ENCODE measurements at regions of chr12 and their contacts with region 1.

Region 1: DNA sequence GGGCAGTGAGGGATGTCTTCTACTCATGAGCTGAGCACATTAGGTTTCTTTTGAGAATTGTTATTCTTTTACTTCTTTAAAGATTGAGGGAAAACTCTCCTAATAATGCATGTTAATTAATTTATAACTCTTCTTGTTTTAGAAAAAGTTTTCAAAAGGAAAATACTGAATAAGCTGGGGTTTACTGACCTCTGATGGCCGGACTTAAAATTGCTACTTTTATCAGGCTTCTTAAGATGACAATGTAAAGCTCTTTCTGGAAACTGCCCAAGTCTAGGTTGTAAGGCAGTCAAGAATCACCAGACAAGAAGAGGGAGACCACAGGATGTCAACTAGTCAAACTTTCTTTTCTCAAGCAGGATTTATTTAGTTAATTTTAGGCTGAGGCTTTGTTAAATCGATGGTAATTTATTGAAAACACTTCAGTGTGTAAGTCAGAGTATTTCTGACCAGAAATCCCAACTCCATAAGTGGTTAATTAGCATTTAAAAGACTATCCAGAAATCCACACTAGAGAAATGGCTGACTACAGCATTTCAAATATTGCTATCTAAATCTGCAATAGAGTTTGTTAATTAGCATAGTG is 82.1 kb downstream of the AVPR1A start:
- ATAC-seq: peak in 3 of 8 experiments; percentile 28 to 56 (median 34)
- H3K4me3 ChIP-seq: no peak overlapping the region
- H3K27ac ChIP-seq: no peak overlapping the region
- H3K4me1 ChIP-seq: peaks cover 0 to 2% of the 10 kb centered on the region in 2 donors

Region 2: DNA sequence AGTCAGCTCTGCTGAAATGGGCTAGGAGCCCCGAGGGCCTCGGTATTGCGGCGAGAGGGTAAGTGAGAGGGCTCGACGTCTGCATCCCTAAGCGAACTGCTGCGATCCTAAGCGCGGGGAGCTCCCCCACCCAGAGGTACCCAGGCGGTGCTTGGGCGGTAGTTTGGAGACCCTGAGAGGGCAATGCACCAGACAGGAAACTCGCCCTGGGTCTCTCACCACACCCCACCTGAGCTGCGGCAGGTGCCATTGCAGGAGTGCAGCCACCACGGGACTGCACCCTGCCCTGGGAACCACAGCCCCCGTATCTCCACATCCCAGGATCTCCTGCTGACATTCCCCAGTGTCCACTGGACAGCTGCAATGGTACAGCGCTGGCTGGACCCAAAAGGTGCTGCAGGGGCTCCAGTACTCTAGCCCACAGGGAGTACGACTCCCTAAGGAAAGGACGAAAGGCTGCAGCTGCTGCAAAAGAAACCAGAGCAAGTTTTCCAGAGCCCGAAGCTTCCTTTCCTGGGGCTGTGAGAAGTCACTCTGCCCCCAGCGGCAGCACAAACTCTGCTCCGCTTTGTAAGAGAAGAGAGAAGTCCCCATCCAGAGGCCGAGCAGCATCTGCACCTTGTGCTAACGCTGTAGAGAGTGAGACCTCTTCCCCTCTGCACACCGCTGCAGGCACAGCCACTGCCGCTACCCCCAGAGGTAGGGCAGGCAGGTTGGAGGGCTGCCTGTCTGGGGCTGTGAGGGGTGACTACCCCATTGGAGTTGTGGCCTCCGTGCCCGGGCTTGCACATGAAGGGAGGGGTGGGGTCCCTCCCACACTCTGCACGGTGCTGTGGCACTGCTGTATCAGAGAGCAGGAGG is 633.4 kb before region 1 on chr12:
- in situ Hi-C with region 1: loop called in 1 of 9 experiments (anchors 25 kb)
- ATAC-seq: peak; percentile 64 to 95 (median 84)
- H3K4me3 ChIP-seq: peak overlapping the region in 3 of 5 donors; percentile 15 to 27 (median 22)
- H3K27ac ChIP-seq: no peak overlapping the region
- H3K4me1 ChIP-seq: no peaks in the 10 kb centered on the region

Region 3: DNA sequence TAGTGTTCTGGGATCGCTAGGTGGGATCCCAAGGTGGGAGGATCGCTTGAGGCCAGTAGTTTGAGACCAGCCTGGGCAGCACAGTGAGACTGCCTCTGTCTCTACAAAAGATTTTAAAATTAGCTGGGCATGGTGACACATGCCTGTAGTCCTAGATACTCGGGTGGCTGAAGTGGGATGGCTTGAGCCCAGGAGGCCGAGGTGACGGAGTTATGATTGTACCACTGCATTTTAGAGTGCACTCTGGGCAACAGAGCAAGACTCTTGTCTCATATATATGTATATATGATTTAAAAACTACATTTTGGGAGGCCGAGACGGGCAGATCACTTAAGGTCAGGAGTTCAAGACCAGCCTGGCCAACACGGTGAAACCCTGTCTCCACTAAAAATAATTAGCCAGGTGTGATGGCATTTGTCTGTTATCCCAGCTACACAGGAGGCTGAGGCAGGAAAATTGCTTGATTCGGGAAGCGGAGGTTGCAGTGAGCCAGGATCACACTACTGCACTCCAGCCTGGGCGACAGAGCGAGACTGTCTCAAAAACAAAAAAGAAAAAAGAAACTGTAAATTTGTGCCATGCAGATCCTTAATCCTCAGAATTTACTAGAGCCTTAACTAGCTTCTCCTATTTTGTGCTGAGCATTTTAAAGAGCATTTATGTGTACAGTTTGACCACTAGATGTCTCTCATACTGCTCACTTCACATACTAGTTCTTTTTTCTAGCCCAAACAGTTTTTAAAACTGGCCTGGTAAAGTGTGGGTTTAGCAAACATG is 487.5 kb before region 1 on chr12:
- in situ Hi-C with region 1: loop called in 1 of 9 experiments (anchors 25 kb)
- ATAC-seq: peak in 7 of 8 experiments; percentile 34 to 75 (median 69)
- H3K4me3 ChIP-seq: no peak overlapping the region
- H3K27ac ChIP-seq: no peak overlapping the region
- H3K4me1 ChIP-seq: no peaks in the 10 kb centered on the region

Region 4: DNA sequence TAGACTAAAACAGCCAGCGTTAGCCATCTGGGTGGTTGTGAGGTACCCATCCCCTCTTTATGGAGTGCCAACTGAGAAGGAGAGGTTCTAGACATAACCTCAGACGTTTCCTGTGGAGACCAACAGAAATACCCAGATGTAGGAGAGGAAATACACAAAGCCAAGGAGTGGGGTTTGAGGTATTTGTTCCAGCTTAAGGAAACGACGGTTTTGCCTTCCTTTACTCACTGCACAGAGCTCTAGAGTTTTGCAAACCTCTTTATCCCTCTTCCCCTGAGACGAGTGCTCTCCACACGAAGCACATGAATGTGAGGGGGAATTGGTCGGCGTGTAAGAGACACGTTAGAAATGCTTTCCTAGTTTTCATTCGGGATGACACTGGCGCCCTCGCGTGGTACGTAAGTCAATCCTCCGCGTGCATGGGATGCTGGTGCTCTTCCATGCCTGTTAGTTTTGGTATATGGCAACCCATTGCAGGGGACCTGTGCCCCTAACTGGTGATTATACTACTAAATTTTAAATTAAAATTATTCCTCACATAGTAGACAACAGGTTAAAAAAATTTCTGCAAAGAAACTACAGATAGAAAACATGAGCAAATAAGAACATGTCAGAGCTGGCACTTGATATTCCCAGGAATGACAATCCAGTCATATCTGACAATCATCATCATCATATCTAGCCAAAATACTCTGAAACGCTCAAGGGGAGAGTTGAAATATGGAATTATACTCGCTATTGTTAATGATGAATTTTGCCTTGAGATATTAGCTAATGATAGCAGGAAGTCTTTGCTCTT is 255.7 kb before region 1 on chr12:
- in situ Hi-C with region 1: loop called in 4 of 9 experiments (anchors 10 to 25 kb)
- ATAC-seq: peak; percentile 30 to 93 (median 72)
- H3K4me3 ChIP-seq: no peak overlapping the region
- H3K27ac ChIP-seq: no peak overlapping the region
- H3K4me1 ChIP-seq: no peaks in the 10 kb centered on the region